Endothelial cell of umbilical vein (primary cell): ENCODE measurements at regions of chr17 and their contacts with region 1.

Region 1: DNA sequence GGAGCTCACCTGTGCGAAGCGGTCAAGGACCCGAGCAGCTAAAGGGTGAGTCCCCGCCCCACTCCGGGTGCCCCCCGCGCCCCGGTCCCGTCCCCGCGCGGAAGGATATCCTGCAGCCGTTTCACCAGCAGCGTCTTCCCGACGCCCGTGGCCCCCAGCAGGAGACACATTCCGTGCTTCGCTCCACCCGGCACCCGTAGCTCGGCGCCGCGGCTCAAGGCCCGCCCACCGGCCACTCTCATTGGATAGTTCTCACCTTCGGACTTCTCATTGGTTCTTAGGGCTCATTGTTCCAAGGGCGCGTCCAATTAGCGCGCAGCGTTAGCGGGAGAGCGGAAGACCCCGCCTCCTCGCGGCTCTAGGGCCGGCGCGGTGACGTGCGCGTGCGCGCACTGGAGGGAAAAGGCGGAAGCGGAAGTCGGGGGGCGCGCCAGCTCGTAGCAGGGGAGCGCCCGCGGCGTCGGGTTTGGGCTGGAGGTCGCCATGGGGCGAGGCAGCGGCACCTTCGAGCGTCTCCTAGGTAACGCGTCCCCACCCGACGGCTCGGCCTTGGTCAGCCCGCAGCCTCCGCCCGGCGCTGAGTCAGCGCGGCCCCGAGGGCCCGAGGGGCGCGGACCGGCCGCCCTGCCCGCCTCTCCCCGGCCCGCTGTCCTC is at the starts of genes ARL16 and HGS:
- DNase-seq: peak; percentile 100
- H3K4me3 ChIP-seq: peak within 1 kb of the TSS; percentile 46 to 93 (median 66)
- H3K27ac ChIP-seq: peak within 1 kb of the TSS; percentile 50
- H3K4me1 ChIP-seq: peaks cover 16% of the 10 kb centered on the region
- H3K27me3 ChIP-seq: no peaks in the 10 kb centered on the region
- CTCF ChIP-seq: no peak
- POLR2A ChIP-seq: peak; percentile 71
- total RNA-seq, gene ARL16: 40.5 and 41.4 TPM in 2 replicates
- total RNA-seq, gene HGS: 150 and 166 TPM in 2 replicates

Region 2: DNA sequence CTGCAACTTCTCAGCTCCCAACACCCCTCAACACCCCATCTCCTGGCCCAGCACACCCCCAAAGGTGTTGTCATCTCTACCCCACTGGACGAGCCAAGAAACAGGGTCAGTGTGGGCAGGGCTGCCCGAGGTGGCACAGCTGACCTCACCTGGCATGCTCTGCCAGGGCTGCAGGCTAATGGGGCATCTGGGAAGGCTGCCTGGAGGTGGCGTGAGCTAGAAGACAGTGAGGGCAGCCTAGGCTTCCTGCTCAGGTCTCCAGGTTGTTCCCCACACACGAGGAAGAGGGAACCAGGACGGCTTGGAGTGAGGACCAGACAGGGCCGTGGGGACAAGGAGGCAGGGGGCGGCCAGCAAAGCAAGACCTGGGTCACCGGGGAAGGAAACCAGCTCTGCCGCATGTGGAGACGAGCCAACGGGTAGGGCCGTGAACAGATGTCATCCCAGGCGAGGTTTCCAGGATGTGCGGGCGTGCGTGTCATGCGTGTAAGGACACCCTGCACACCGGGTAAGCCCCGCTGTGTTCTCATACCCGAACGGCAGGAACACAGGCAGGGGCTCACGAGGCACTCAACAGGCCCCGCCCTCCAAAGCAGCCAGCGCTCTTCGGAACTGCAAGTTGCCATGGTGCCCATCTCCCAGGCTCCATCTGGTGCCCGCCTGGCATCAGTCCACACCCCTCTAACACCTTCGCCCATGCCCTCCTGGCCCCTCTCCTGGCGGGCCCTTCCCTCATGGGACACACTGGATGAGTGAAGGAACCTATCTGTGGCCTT is 548.0 kb before region 1 on chr17:
- CTCF ChIA-PET with region 1: no interaction called
- POLR2A ChIA-PET with region 1: no interaction called
- dilution Hi-C with region 1: no loop called
- intact Hi-C with region 1: no loop called
- DNase-seq: no peak
- H3K4me3 ChIP-seq: no peak overlapping the region
- H3K27ac ChIP-seq: no peak overlapping the region
- H3K4me1 ChIP-seq: no peaks in the 10 kb centered on the region
- H3K27me3 ChIP-seq: no peaks in the 10 kb centered on the region
- CTCF ChIP-seq: no peak
- POLR2A ChIP-seq: no peak

Region 3: GRCh38 chr17:81666342-81667191 is 17.1 kb before region 1 on chr17 and contains the starts of genes CCDC137 and OXLD1:
- CTCF ChIA-PET with region 1: interaction called, 4 read pairs
- POLR2A ChIA-PET with region 1: interaction called, 3 read pairs
- dilution Hi-C with region 1: no loop called
- intact Hi-C with region 1: loop called (anchors 1 kb)
- DNase-seq: peak; percentile 95
- H3K4me3 ChIP-seq: peak within 1 kb of the TSS; percentile 34 to 76 (median 64)
- H3K27ac ChIP-seq: peak within 1 kb of the TSS; percentile 36
- H3K4me1 ChIP-seq: peaks cover 18% of the 10 kb centered on the region
- H3K27me3 ChIP-seq: no peaks in the 10 kb centered on the region
- CTCF ChIP-seq: no peak
- POLR2A ChIP-seq: peak; percentile 90
- total RNA-seq, gene CCDC137: 32.2 and 32.7 TPM in 2 replicates
- total RNA-seq, gene OXLD1: 18.5 and 20.1 TPM in 2 replicates

Region 4: DNA sequence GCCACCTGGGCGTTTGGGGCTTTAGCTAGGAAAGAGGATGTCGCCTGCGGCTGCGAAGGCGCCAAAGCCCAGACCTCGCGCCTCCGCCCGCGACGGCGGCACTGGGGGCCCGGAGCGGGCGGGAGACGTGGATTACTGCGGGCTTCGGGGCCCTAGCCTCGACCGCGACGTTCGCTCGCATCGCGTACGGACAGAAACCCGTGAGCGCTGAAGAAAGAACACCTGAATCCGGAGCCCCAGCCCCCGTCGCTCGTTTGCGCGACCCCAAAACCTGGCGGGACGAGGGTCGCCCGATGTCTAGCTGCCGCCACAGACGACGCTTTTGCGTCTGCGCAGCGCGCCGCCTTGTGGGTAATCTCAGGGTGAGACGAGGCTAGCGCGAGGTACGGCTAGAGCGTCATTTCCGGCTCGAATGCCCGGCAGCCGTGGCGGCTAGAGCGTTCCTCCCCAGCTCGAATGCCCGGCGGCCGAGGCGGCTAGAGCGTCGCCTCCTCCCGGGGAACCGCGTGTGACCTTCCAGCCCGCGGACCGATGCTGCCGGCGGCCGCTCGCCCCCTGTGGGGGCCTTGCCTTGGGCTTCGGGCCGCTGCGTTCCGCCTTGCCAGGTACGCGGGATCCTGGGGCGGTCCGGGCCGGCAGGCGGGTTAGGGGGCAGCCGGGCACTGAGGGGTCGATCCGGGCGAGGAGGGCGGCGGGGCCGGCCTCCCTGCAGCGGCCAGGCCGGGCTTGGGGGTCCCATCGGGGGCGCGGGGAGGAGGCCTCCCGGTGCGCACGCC is 19.4 kb after region 1 on chr17 and contains the start of gene MRPL12:
- CTCF ChIA-PET with region 1: interaction called, 19 read pairs
- POLR2A ChIA-PET with region 1: interaction called, 4 read pairs
- dilution Hi-C with region 1: no loop called
- intact Hi-C with region 1: loop called (anchors 2 kb)
- DNase-seq: peak; percentile 93
- H3K4me3 ChIP-seq: peak within 1 kb of the TSS; percentile 70 to 86 (median 76)
- H3K27ac ChIP-seq: peak within 1 kb of the TSS; percentile 87
- H3K4me1 ChIP-seq: peaks cover 19% of the 10 kb centered on the region
- H3K27me3 ChIP-seq: no peaks in the 10 kb centered on the region
- CTCF ChIP-seq: peak in 1 of 2 donors; percentile 28
- POLR2A ChIP-seq: peak; percentile 98
- total RNA-seq, gene MRPL12: 89.2 and 91.9 TPM in 2 replicates

Region 5: DNA sequence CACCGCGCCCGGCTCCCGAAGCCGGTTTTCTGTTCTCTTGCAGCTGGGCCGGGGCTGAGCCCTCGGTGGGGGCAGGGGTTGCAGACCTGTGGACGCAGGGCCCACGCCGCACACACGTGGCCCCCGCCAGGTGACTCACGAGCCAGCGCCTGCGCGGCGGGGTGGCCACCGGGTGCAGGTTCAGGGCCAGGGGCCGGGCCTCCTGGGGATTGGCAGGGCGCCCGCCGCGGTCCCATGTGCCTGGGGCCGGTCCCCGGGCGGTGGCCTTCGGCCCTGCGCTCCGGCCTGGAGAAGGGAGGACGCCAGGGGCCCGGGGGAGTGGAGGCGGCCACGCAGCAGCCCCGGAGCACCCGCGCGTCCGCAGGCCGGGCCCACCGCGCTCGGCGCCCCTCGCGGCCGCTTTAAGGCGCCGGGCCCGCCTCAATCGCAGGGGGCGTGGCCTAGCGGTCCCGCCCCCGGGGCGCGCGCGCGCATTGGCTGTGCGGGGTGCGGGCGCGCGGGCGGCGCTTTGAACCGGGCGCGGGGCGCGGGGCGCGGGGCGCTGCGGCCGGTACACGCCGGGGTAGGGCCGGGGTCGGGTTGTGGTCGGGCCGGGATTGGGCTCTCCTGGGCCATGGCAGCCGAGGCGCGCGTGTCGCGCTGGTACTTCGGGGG is 28.2 kb after region 1 on chr17 and contains the start of gene SLC25A10:
- CTCF ChIA-PET with region 1: no interaction called
- POLR2A ChIA-PET with region 1: no interaction called
- dilution Hi-C with region 1: no loop called
- intact Hi-C with region 1: loop called (anchors 1 kb)
- DNase-seq: peak; percentile 66
- H3K4me3 ChIP-seq: peak within 1 kb of the TSS; percentile 51 to 61 (median 56)
- H3K27ac ChIP-seq: no peak within 1 kb of the TSS
- H3K4me1 ChIP-seq: peaks cover 18% of the 10 kb centered on the region
- H3K27me3 ChIP-seq: no peaks in the 10 kb centered on the region
- CTCF ChIP-seq: no peak
- POLR2A ChIP-seq: no peak
- total RNA-seq, gene SLC25A10: 16.7 and 17.2 TPM in 2 replicates

Region 6: GRCh38 chr17:81821603-81822311 is 138.0 kb after region 1 on chr17:
- CTCF ChIA-PET with region 1: no interaction called
- POLR2A ChIA-PET with region 1: no interaction called
- dilution Hi-C with region 1: no loop called
- intact Hi-C with region 1: no loop called
- DNase-seq: peak; percentile 63
- H3K4me3 ChIP-seq: no peak overlapping the region
- H3K27ac ChIP-seq: no peak overlapping the region
- H3K4me1 ChIP-seq: no peaks in the 10 kb centered on the region
- H3K27me3 ChIP-seq: peaks cover 0 to 2% of the 10 kb centered on the region in 2 experiments
- CTCF ChIP-seq: peak; percentile 57 to 76
- POLR2A ChIP-seq: no peak

Region 7: GRCh38 chr17:81833160-81833920 is 149.6 kb after region 1 on chr17 and contains the start of gene MCRIP1:
- CTCF ChIA-PET with region 1: no interaction called
- POLR2A ChIA-PET with region 1: no interaction called
- dilution Hi-C with region 1: no loop called
- intact Hi-C with region 1: no loop called
- DNase-seq: peak; percentile 91
- H3K4me3 ChIP-seq: peak within 1 kb of the TSS; percentile 59 to 72 (median 68)
- H3K27ac ChIP-seq: peak within 1 kb of the TSS; percentile 74
- H3K4me1 ChIP-seq: peaks cover 11% of the 10 kb centered on the region
- H3K27me3 ChIP-seq: no peaks in the 10 kb centered on the region
- CTCF ChIP-seq: no peak
- POLR2A ChIP-seq: peak; percentile 82
- total RNA-seq, gene MCRIP1: 121 and 129 TPM in 2 replicates